Mammary epithelial cell (primary cell): ENCODE measurements at regions of chr4 and their contacts with region 1.

Region 1: GRCh38 chr4:164012396-164013027 is 518.0 kb downstream of the TMA16 start:
- DNase-seq: peak; percentile 16
- H3K4me3 ChIP-seq: no peak overlapping the region
- H3K27ac ChIP-seq: no peak overlapping the region
- H3K4me1 ChIP-seq: no peaks in the 10 kb centered on the region
- H3K27me3 ChIP-seq: no peaks in the 10 kb centered on the region
- CTCF ChIP-seq: peak; percentile 50 to 64

Region 2: GRCh38 chr4:163484906-163485305 is 527.6 kb before region 1 on chr4:
- CTCF ChIA-PET with region 1: no interaction called
- dilution Hi-C with region 1: no loop called
- in situ Hi-C with region 1: no loop called
- intact Hi-C with region 1: loop called (anchors 10 kb)
- DNase-seq: peak; percentile 8
- H3K4me3 ChIP-seq: no peak overlapping the region
- H3K27ac ChIP-seq: no peak overlapping the region
- H3K4me1 ChIP-seq: no peaks in the 10 kb centered on the region
- H3K27me3 ChIP-seq: no peaks in the 10 kb centered on the region
- CTCF ChIP-seq: peak; percentile 50 to 54

Region 3: DNA sequence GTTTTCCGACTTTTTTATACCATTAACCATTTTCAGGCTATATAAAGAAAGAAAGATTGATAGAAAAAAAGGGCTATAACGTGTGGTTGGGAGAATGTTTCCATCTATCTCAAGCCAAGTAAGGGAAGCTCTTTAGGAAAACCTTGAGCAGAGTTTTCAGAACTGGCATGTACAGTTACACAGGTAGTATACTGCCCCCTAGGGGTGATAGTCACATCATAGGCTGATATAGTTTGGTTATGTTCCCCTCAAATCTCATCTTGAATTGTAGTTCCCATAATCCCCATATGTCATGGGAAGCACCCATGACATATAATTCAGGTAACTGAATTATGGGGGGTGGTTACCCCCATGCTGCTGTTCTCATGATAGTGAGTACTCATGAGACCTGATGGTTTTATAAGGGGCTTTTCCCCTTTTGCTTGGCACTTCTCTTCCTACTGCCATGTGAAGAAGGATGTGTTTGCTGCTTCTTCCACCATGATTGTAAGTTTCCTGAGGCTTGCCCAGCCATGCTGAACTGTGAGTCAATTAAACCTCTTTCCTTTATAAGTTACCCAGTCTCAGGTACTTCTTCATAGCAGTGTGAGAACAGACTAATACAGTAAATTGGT is 331.2 kb before region 1 on chr4:
- CTCF ChIA-PET with region 1: no interaction called
- dilution Hi-C with region 1: no loop called
- in situ Hi-C with region 1: no loop called
- intact Hi-C with region 1: loop called (anchors 2 kb)
- DNase-seq: no peak
- H3K4me3 ChIP-seq: no peak overlapping the region
- H3K27ac ChIP-seq: no peak overlapping the region
- H3K4me1 ChIP-seq: no peaks in the 10 kb centered on the region
- H3K27me3 ChIP-seq: no peaks in the 10 kb centered on the region
- CTCF ChIP-seq: peak; percentile 54 to 57

Region 4: DNA sequence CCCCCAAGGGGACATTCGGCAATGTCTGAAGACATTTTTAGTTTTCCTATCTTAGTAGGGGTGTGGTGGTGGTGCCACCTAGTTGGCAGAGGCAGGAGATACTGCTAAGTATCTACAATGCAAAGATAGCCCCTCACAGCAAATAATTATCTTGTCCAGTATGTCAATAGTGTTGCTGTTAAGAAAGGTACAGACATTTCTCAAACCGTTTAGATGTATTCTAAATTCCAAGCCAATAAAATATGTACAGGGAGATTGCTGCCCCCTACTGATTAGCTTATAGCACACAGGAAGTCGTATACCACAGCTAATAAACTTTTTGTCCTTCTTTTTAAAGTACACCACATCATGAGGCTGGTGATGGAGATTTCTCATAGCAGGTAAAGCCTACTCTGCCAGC is 257.5 kb before region 1 on chr4:
- CTCF ChIA-PET with region 1: no interaction called
- dilution Hi-C with region 1: no loop called
- in situ Hi-C with region 1: no loop called
- intact Hi-C with region 1: loop called (anchors 2 kb)
- DNase-seq: peak; percentile 23
- H3K4me3 ChIP-seq: no peak overlapping the region
- H3K27ac ChIP-seq: no peak overlapping the region
- H3K4me1 ChIP-seq: no peaks in the 10 kb centered on the region
- H3K27me3 ChIP-seq: peaks cover 2% of the 10 kb centered on the region
- CTCF ChIP-seq: peak; percentile 47 to 60

Region 5: GRCh38 chr4:163804001-163804400 is 208.5 kb before region 1 on chr4:
- CTCF ChIA-PET with region 1: no interaction called
- dilution Hi-C with region 1: no loop called
- in situ Hi-C with region 1: no loop called
- intact Hi-C with region 1: no loop called
- DNase-seq: no peak
- H3K4me3 ChIP-seq: no peak overlapping the region
- H3K27ac ChIP-seq: no peak overlapping the region
- H3K4me1 ChIP-seq: no peaks in the 10 kb centered on the region
- H3K27me3 ChIP-seq: no peaks in the 10 kb centered on the region
- CTCF ChIP-seq: no peak

Region 6: DNA sequence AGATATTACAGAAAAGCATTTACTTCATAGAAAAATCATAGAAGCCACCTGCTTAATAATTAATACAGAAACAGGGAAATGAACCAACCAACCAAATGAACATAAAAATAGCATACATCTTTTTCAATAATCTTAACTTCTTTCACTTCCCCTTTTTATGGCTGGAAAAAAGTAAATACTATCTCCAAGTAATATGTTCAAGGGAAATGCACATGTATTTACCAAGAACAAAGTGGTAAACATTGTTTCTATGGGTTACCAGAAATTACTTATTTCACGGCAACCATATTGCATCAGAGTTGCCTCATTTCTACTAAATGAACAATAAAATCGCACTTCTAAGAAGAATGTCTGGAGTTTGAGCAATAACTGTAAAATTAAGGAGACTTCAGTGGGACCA is 196.7 kb before region 1 on chr4:
- CTCF ChIA-PET with region 1: no interaction called
- dilution Hi-C with region 1: no loop called
- in situ Hi-C with region 1: no loop called
- intact Hi-C with region 1: loop called (anchors 1 kb)
- DNase-seq: no peak
- H3K4me3 ChIP-seq: no peak overlapping the region
- H3K27ac ChIP-seq: no peak overlapping the region
- H3K4me1 ChIP-seq: no peaks in the 10 kb centered on the region
- H3K27me3 ChIP-seq: no peaks in the 10 kb centered on the region
- CTCF ChIP-seq: no peak